CD8-positive, alpha-beta T cell (primary cell): ENCODE measurements at regions of chr4 and their contacts with region 1.

Region 1: DNA sequence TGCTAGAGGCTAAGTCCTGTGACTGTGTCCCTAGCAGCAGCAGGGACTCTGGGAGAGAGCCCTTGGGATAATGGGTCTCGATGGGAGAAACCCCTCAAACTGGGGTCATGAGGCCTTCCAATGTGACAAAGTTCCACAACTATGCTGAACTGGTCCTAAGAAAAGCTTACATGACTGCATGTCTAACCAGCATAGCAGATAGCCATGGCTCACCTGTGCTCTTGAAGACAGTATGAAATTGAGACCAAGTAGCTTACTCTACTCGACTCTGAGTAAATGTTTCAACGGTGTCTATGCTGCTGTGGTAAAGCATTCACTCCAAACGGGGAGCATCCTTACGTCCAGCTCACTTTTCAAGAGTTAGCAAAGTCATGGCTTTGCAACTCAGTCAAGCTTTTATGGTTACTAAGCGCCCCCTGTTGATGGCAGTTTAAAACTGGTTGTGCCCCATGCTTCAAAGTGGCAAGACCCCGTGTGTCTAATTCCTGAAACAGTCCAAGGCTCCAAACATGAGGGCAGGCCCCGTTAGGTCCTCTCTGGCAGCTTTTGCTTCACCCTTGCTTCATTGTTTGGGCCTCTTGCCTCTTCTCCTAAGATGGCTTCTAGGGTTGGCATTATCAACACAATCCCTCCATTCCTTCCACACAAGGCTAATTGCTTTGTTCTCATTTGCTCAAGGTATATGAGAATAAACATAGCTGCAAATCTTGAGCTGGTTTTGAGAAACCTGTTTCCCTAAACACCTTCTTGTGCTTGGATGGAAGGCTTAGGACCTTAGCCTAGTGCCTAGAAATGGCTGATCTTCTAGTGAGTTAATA is 46.6 kb downstream of the CCNG2 start:
- DNase-seq: peak; percentile 28 to 83 (median 72)
- ATAC-seq: peak; percentile 71
- H3K4me3 ChIP-seq: no peak overlapping the region
- H3K4me3 Mint-ChIP-seq: no peak overlapping the region
- H3K27ac ChIP-seq: no peak overlapping the region
- H3K27ac Mint-ChIP-seq: no peak overlapping the region
- H3K4me1 ChIP-seq: no peaks in the 10 kb centered on the region
- H3K4me1 Mint-ChIP-seq: peaks cover 10% of the 10 kb centered on the region
- H3K27me3 ChIP-seq: no peaks in the 10 kb centered on the region
- H3K27me3 Mint-ChIP-seq: peaks cover 5% of the 10 kb centered on the region
- CTCF ChIP-seq: peak; percentile 75

Region 2: DNA sequence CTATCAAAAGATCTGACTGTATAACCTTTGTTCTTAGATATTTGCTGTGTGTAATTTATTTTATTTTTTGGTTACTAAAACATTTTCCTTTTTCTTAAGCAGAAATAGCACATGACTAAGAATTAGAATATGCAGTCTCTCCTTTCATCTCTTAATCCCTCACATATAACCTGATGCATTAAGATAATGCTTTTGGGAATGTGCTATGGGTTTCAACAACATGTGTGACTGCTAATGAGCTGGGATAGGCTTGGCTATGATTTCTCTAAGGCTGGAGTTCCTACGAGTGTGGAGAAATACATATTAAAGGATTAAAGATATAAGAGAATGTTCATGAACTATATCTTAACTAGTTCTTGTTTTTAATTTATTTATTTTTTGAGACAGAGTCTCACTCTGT is 727.0 kb before region 1 on chr4:
- CTCF ChIA-PET with region 1: no interaction called
- POLR2A ChIA-PET with region 1: no interaction called
- intact Hi-C with region 1: no loop called
- DNase-seq: no peak
- ATAC-seq: no peak
- H3K4me3 ChIP-seq: no peak overlapping the region
- H3K4me3 Mint-ChIP-seq: no peak overlapping the region
- H3K27ac ChIP-seq: no peak overlapping the region
- H3K27ac Mint-ChIP-seq: no peak overlapping the region
- H3K4me1 ChIP-seq: no peaks in the 10 kb centered on the region
- H3K4me1 Mint-ChIP-seq: no peaks in the 10 kb centered on the region
- H3K27me3 ChIP-seq: no peaks in the 10 kb centered on the region
- H3K27me3 Mint-ChIP-seq: peaks cover 13% of the 10 kb centered on the region
- CTCF ChIP-seq: no peak

Region 3: DNA sequence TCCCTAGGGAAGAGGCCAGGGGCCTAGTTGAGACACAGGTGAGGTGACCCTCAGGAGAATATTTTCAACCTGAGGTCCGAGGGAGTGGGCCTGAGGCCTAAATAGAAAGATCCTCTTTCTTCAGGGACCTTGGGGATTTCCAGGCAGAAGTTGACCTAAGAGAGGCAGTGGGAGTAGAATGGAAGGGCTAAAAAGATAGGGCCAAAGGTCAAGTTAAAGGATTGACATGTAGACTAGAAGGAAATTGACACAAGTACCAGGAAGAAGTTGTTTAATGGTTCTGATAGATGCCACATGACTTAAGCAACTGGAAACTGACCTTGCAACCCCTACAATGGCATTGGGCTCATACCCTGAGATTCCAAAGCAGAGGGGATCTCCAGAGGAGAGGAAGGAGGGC is 691.6 kb before region 1 on chr4:
- CTCF ChIA-PET with region 1: no interaction called
- POLR2A ChIA-PET with region 1: no interaction called
- intact Hi-C with region 1: loop called in 1 of 2 experiments (anchors 1 kb)
- DNase-seq: no peak
- ATAC-seq: no peak
- H3K4me3 ChIP-seq: no peak overlapping the region
- H3K4me3 Mint-ChIP-seq: no peak overlapping the region
- H3K27ac ChIP-seq: no peak overlapping the region
- H3K27ac Mint-ChIP-seq: no peak overlapping the region
- H3K4me1 ChIP-seq: no peaks in the 10 kb centered on the region
- H3K4me1 Mint-ChIP-seq: no peaks in the 10 kb centered on the region
- H3K27me3 ChIP-seq: no peaks in the 10 kb centered on the region
- H3K27me3 Mint-ChIP-seq: no peaks in the 10 kb centered on the region
- CTCF ChIP-seq: no peak

Region 4: GRCh38 chr4:76624241-76624681 is 579.3 kb before region 1 on chr4:
- CTCF ChIA-PET with region 1: no interaction called
- POLR2A ChIA-PET with region 1: no interaction called
- intact Hi-C with region 1: no loop called
- DNase-seq: no peak
- ATAC-seq: no peak
- H3K4me3 ChIP-seq: no peak overlapping the region
- H3K4me3 Mint-ChIP-seq: no peak overlapping the region
- H3K27ac ChIP-seq: no peak overlapping the region
- H3K27ac Mint-ChIP-seq: no peak overlapping the region
- H3K4me1 ChIP-seq: no peaks in the 10 kb centered on the region
- H3K4me1 Mint-ChIP-seq: no peaks in the 10 kb centered on the region
- H3K27me3 ChIP-seq: no peaks in the 10 kb centered on the region
- H3K27me3 Mint-ChIP-seq: peaks cover 26% of the 10 kb centered on the region
- CTCF ChIP-seq: no peak

Region 5: GRCh38 chr4:77052352-77052751 is 151.2 kb before region 1 on chr4:
- CTCF ChIA-PET with region 1: interaction called, 111 read pairs
- POLR2A ChIA-PET with region 1: interaction called, 3 read pairs
- intact Hi-C with region 1: loop called (anchors 1 kb)
- DNase-seq: peak; percentile 30 to 75 (median 69)
- ATAC-seq: peak; percentile 52
- H3K4me3 ChIP-seq: no peak overlapping the region
- H3K4me3 Mint-ChIP-seq: no peak overlapping the region
- H3K27ac ChIP-seq: no peak overlapping the region
- H3K27ac Mint-ChIP-seq: no peak overlapping the region
- H3K4me1 ChIP-seq: no peaks in the 10 kb centered on the region
- H3K4me1 Mint-ChIP-seq: peaks cover 7% of the 10 kb centered on the region
- H3K27me3 ChIP-seq: no peaks in the 10 kb centered on the region
- H3K27me3 Mint-ChIP-seq: no peaks in the 10 kb centered on the region
- CTCF ChIP-seq: peak; percentile 45

Region 6: DNA sequence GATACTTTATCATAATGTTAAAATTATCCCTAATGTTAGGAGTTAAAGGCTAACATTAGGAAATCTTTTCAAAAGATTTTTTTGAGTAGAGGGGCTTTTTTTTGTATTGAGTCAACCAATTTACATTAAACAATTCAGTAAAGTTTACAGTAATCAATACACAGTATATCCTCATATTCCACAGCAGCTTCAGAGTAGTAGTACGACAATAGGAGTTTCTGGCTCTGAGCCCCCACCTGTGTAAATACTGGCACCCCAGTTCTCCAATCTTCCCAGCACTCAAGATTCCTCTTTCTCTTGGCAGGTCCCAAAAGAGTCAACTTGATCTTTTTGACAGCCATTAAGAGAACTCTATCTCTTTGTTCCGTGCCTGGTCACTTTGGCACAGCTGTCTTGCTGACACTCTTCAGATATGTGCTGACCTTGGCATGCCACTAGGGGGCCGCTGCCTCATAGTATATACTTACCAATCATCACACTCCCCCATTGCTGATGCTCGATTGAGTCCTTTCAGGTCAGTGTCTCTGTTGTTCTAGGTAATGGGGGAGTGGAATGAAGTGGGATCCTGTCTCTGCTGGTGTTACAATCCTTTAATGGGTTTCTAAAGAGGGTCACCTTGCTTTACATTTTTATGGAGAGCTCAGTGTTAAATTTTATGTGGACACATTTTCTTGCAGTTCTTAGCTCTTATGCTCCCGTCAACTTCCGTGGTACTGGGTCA is 108.3 kb before region 1 on chr4:
- CTCF ChIA-PET with region 1: interaction called, 322 read pairs
- POLR2A ChIA-PET with region 1: interaction called, 3 read pairs
- intact Hi-C with region 1: loop called (anchors 1 kb)
- DNase-seq: peak; percentile 48 to 79 (median 75)
- ATAC-seq: peak; percentile 99
- H3K4me3 ChIP-seq: no peak overlapping the region
- H3K4me3 Mint-ChIP-seq: no peak overlapping the region
- H3K27ac ChIP-seq: no peak overlapping the region
- H3K27ac Mint-ChIP-seq: no peak overlapping the region
- H3K4me1 ChIP-seq: peaks cover 1% of the 10 kb centered on the region
- H3K4me1 Mint-ChIP-seq: peaks cover 14% of the 10 kb centered on the region
- H3K27me3 ChIP-seq: peaks cover 0 to 2% of the 10 kb centered on the region in 2 experiments
- H3K27me3 Mint-ChIP-seq: no peaks in the 10 kb centered on the region
- CTCF ChIP-seq: peak; percentile 83

Region 7: DNA sequence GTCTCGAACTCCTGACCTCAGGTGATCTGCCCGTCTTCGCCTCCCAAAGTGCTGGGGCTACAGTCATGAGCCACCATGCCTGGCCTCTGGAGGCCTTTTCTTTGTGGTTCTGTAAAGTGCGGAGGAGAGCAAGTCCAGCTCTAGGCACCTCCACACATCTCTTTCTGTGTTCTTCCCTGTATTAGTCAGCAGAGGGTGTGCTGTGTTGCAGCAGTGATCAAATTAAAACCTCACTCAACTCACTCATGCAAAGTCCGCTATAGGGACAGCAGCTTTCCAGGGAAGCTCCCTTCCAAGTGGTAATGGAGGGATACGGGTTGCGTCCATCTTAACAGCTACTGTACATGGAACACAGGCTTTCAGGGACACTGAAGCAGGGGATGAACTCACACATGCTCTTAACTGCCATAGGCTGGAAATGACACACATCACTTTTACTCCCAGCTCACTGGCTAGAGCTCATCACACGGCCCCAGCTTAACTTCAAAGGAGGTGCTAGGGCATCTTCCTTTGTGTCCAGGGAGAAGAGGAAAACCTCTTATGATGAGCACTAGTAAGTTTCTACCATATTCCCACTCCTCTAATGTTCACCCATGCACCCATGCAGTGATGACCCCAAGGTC is 82.6 kb before region 1 on chr4:
- CTCF ChIA-PET with region 1: interaction called, 20 read pairs
- POLR2A ChIA-PET with region 1: no interaction called
- intact Hi-C with region 1: no loop called
- DNase-seq: no peak
- ATAC-seq: no peak
- H3K4me3 ChIP-seq: no peak overlapping the region
- H3K4me3 Mint-ChIP-seq: no peak overlapping the region
- H3K27ac ChIP-seq: no peak overlapping the region
- H3K27ac Mint-ChIP-seq: no peak overlapping the region
- H3K4me1 ChIP-seq: no peaks in the 10 kb centered on the region
- H3K4me1 Mint-ChIP-seq: peaks cover 3% of the 10 kb centered on the region
- H3K27me3 ChIP-seq: no peaks in the 10 kb centered on the region
- H3K27me3 Mint-ChIP-seq: peaks cover 3% of the 10 kb centered on the region
- CTCF ChIP-seq: no peak

Region 8: DNA sequence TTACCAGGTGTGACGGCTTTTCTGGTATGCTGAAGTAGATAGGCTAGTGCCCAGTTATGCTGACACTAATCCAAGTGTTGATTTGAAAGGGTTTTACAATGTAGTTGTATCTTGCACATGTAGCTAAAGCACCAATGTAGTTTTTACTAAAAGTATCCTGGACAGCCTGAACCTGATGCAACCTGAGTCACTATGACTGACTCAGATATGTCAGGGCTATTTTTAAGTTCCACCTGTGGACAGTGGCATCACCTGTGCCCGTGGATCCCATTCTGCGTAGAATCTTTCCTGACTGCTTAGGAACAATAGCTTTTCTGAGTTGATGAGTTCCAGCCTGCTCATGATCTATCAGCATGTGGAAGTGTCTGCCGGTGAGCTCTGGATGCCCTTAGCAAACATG is 11.5 kb after region 1 on chr4:
- CTCF ChIA-PET with region 1: interaction called, 19 read pairs
- POLR2A ChIA-PET with region 1: no interaction called
- intact Hi-C with region 1: no loop called
- DNase-seq: no peak
- ATAC-seq: no peak
- H3K4me3 ChIP-seq: no peak overlapping the region
- H3K4me3 Mint-ChIP-seq: no peak overlapping the region
- H3K27ac ChIP-seq: no peak overlapping the region
- H3K27ac Mint-ChIP-seq: no peak overlapping the region
- H3K4me1 ChIP-seq: no peaks in the 10 kb centered on the region
- H3K4me1 Mint-ChIP-seq: no peaks in the 10 kb centered on the region
- H3K27me3 ChIP-seq: no peaks in the 10 kb centered on the region
- H3K27me3 Mint-ChIP-seq: no peaks in the 10 kb centered on the region
- CTCF ChIP-seq: no peak

Region 9: DNA sequence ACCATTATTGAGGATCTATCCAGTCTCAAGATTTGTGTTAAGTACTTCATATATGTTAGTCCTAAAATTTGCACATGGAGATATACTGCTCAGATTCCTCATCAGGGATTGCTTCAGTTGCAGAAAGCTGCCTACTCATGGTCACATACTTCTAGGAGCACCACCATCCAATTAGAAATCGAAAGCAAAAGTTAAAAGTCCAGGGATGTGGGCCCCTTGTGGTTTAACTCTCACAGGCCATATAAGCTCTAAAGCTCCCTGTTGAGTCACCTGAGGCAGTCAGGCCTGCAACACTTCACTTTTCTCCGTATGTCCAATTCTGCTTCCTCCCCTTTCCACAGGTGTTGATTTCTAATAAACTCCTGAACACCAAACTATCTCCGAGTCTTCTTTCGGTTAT is 531.3 kb after region 1 on chr4:
- CTCF ChIA-PET with region 1: no interaction called
- POLR2A ChIA-PET with region 1: no interaction called
- intact Hi-C with region 1: no loop called
- DNase-seq: peak in 4 of 9 experiments; percentile 5 to 77 (median 42)
- ATAC-seq: peak; percentile 74
- H3K4me3 ChIP-seq: no peak overlapping the region
- H3K4me3 Mint-ChIP-seq: peak overlapping the region; percentile 77
- H3K27ac ChIP-seq: peak overlapping the region in 1 of 2 experiments; percentile 23
- H3K27ac Mint-ChIP-seq: peak overlapping the region; percentile 86
- H3K4me1 ChIP-seq: peaks cover 28% of the 10 kb centered on the region
- H3K4me1 Mint-ChIP-seq: peaks cover 74% of the 10 kb centered on the region
- H3K27me3 ChIP-seq: no peaks in the 10 kb centered on the region
- H3K27me3 Mint-ChIP-seq: no peaks in the 10 kb centered on the region
- CTCF ChIP-seq: no peak

Region 10: DNA sequence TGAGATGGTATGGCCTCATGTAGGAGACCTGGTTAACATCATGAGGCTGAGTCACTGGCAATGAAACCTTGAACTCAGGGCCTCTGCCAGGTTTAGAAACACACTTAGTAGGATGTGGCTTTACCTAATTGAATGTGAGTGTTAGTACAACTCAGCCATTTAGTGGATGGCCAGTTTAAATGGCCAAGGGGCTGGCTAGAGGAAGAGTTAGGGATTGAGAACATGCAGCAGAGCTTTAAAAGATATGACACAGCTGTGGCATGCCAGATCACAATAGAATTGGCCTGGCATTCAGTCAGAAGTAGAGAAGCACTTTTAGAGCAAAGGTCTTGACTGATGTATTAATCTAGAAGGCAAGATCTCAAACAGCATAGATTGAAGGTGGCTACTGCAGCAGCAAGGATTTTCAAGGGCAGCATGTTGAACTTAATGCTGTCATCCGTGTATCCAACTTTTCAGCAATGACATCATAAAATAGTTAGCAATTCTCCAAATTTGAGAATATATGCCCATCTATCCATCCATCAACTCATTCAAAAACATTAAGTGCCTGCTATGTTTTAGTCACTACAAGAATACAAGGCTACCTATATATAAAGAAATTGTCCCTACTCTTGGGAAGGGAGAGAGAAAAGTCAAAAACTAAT is 1023.9 kb after region 1 on chr4:
- CTCF ChIA-PET with region 1: no interaction called
- POLR2A ChIA-PET with region 1: no interaction called
- intact Hi-C with region 1: no loop called
- DNase-seq: no peak
- ATAC-seq: no peak
- H3K4me3 ChIP-seq: no peak overlapping the region
- H3K4me3 Mint-ChIP-seq: no peak overlapping the region
- H3K27ac ChIP-seq: no peak overlapping the region
- H3K27ac Mint-ChIP-seq: no peak overlapping the region
- H3K4me1 ChIP-seq: no peaks in the 10 kb centered on the region
- H3K4me1 Mint-ChIP-seq: no peaks in the 10 kb centered on the region
- H3K27me3 ChIP-seq: no peaks in the 10 kb centered on the region
- H3K27me3 Mint-ChIP-seq: peaks cover 2% of the 10 kb centered on the region
- CTCF ChIP-seq: no peak